ENCODE measurements at regions of chr19 and their contacts with region 1.

Region 1: GRCh38 chr19:5790573-5791520 is at the start of gene DUS3L:
- DNase-seq: peak; percentile 96 to 99
- ATAC-seq: peak; percentile 97 to 98 (median 98)
- H3K4me3 ChIP-seq: peak within 1 kb of the TSS; percentile 90
- H3K27ac ChIP-seq: peak within 1 kb of the TSS; percentile 100
- H3K4me1 ChIP-seq: peaks cover 7% of the 10 kb centered on the region
- H3K27me3 ChIP-seq: peaks cover 0 to 6% (median 0%) of the 10 kb centered on the region in 3 donors
- CTCF ChIP-seq: no peak
- total RNA-seq, gene DUS3L: 13.4 to 29.9 (median 20.6) TPM

Region 2: GRCh38 chr19:5719961-5720790 is 70.7 kb before region 1 on chr19 and contains the starts of genes CATSPERD and LONP1:
- intact Hi-C with region 1: loop called in 1 of 2 experiments (anchors 5 kb)
- DNase-seq: peak; percentile 99
- ATAC-seq: peak; percentile 96 to 97 (median 96)
- H3K4me3 ChIP-seq: peak within 1 kb of the TSS; percentile 95
- H3K27ac ChIP-seq: peak within 1 kb of the TSS; percentile 99
- H3K4me1 ChIP-seq: peaks cover 20% of the 10 kb centered on the region
- H3K27me3 ChIP-seq: peaks cover 0 to 3% (median 0%) of the 10 kb centered on the region in 3 donors
- CTCF ChIP-seq: peak; percentile 88
- total RNA-seq, gene CATSPERD: not detected
- total RNA-seq, gene LONP1: 61.0 to 97.1 (median 73.8) TPM